AG04450 (cell line): ENCODE measurements at regions of chr18 and their contacts with region 1.

Region 1: GRCh38 chr18:46281185-46282176 is 177.3 kb downstream of the HAUS1 start:
- DNase-seq: peak; percentile 49
- H3K4me3 ChIP-seq: no peak overlapping the region
- H3K27ac ChIP-seq: no peak overlapping the region
- H3K27me3 ChIP-seq: no peaks in the 10 kb centered on the region
- CTCF ChIP-seq: peak; percentile 97

Region 2: DNA sequence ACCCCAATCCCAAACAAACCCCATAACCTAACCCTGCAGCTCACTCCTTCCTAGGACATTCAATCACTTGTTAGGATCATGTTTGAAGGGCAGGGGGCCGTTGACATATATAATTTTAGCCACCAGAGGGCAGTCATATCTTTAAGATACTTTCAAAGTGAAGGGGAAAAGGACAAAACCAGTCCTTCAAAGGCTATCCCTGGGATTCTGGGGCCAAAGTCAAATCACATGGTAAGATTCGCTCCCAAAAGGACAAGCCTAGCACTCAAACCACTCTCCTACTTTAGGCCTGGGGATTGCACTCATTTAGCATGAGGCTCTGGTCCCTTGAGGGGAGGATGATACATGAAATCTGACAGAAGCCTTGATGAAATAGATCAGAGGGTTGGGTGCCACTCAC is 132.7 kb before region 1 on chr18:
- CTCF ChIA-PET with region 1: interaction called, 46 read pairs
- POLR2A ChIA-PET with region 1: no interaction called
- DNase-seq: no peak
- H3K4me3 ChIP-seq: no peak overlapping the region
- H3K27ac ChIP-seq: no peak overlapping the region
- H3K27me3 ChIP-seq: no peaks in the 10 kb centered on the region
- CTCF ChIP-seq: peak; percentile 70

Region 3: GRCh38 chr18:46264235-46264893 is 17.1 kb before region 1 on chr18:
- CTCF ChIA-PET with region 1: interaction called, 20 read pairs
- POLR2A ChIA-PET with region 1: interaction called, 5 read pairs
- DNase-seq: no peak
- H3K4me3 ChIP-seq: no peak overlapping the region
- H3K27ac ChIP-seq: no peak overlapping the region
- H3K27me3 ChIP-seq: no peaks in the 10 kb centered on the region
- CTCF ChIP-seq: no peak

Region 4: DNA sequence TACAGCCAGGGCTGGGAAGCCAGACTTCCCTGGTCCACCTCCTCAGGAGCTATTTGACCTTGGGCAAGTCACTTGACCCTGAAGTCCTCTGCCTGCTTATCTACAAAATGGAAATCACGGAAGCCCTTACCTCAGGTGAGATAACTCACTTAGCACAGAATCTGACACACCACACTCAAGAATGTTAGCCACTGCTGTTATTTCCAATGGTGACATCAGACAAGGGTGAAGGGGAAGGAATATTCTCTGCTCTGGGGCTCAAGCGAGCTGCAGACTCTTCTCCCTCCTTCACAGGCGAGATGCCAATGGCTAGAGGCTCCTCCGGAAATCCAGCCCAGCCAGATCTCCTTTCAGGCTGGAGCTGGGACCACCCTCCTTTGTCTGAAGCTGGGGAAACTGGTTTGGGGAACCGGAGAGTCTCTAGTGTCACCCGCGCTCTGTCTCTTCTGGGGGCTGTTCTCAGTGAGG is 12.3 kb after region 1 on chr18:
- CTCF ChIA-PET with region 1: interaction called, 10 read pairs
- POLR2A ChIA-PET with region 1: no interaction called
- DNase-seq: no peak
- H3K4me3 ChIP-seq: no peak overlapping the region
- H3K27ac ChIP-seq: no peak overlapping the region
- H3K27me3 ChIP-seq: peaks cover 4% of the 10 kb centered on the region
- CTCF ChIP-seq: no peak

Region 5: DNA sequence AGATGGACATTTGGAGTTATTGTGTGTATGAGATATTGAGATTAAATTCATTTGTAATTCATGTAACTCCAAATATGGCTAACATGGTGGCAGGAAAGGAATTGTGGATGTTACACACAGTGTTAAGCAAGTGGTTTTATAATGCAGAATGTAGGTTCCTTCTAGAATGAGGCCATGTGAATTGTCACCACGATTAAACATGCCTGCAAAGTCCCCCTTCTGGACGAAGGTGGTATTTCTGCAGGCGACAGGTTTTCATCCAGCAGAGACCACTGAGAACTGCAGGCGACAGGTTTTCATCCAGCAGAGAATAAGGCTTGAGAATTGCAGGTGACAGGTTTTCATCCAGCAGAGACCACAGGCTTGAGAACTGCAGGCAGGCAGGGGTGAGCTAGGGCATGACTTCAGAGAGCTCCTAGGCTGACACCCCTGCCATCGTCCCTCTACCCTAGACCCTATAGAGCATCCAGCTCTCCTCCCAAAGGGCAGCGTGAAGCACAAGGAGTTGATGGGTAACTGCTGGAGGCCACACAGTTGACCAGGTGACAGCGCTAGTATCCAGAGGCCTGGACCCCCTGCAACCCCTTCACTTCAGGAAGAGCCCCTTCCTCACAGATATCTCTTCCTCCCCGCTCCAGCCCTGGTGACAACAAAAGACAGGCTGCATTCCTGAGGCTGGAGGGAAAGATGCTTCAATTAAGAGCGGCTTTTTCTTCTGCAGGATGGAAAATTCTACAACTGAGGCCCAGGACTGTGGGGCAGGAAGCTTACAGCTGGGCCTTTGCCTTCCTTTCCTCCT is 199.8 kb after region 1 on chr18:
- CTCF ChIA-PET with region 1: interaction called, 42 read pairs
- POLR2A ChIA-PET with region 1: no interaction called
- DNase-seq: peak; percentile 18
- H3K4me3 ChIP-seq: no peak overlapping the region
- H3K27ac ChIP-seq: no peak overlapping the region
- H3K27me3 ChIP-seq: no peaks in the 10 kb centered on the region
- CTCF ChIP-seq: peak; percentile 72

Region 6: GRCh38 chr18:46622999-46623398 is 341.5 kb after region 1 on chr18:
- CTCF ChIA-PET with region 1: interaction called, 16 read pairs
- POLR2A ChIA-PET with region 1: no interaction called
- DNase-seq: no peak
- H3K4me3 ChIP-seq: no peak overlapping the region
- H3K27ac ChIP-seq: no peak overlapping the region
- H3K27me3 ChIP-seq: no peaks in the 10 kb centered on the region
- CTCF ChIP-seq: no peak

Region 7: GRCh38 chr18:46660955-46661749 is 379.7 kb after region 1 on chr18:
- CTCF ChIA-PET with region 1: interaction called, 117 read pairs
- POLR2A ChIA-PET with region 1: no interaction called
- DNase-seq: no peak
- H3K4me3 ChIP-seq: no peak overlapping the region
- H3K27ac ChIP-seq: no peak overlapping the region
- H3K27me3 ChIP-seq: peaks cover 2% of the 10 kb centered on the region
- CTCF ChIP-seq: no peak